ENCODE measurements at regions of chr18 and their contacts with region 1.

Region 1: DNA sequence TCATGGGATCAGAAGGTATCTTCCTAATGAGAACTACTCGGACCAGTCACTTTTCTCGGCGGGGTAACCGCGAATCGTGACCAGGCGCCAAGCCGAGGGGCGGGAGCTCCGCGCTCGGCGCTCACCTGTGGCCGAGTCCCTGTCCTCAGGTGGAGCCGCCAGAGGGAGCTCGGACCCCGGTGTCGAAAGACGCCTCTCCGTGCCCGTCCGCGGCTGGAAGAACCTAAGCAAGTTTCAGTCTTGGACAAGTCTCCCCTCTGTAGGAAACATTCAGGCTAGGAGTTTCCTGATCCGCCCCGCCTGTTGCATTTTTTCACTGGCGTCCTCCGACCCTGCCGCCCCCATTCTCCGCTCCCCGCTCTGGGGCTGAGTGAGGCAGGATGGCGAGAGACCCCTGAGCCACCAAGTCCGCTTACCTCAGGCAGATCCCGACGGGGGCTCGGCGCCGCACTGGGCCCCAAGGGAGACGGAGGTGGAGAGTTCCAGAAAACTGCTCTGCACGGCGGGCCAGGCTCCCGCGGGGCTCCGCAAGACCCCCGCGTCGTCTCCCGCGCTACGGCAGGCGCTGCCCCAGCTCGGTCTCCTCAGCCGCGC is 478 bp downstream of the DSEL start:
- DNase-seq: peak; percentile 88
- H3K4me3 ChIP-seq: peak overlapping the region; percentile 85
- H3K27ac ChIP-seq: peak overlapping the region; percentile 90
- H3K4me1 ChIP-seq: peaks cover 8% of the 10 kb centered on the region
- H3K27me3 ChIP-seq: no peaks in the 10 kb centered on the region
- CTCF ChIP-seq: peak; percentile 79

Region 2: GRCh38 chr18:67590571-67591141 is 74.6 kb after region 1 on chr18:
- CTCF ChIA-PET with region 1: no interaction called
- POLR2A ChIA-PET with region 1: no interaction called
- intact Hi-C with region 1: loop called (anchors 10 kb)
- DNase-seq: peak; percentile 76
- H3K4me3 ChIP-seq: no peak overlapping the region
- H3K27ac ChIP-seq: no peak overlapping the region
- H3K4me1 ChIP-seq: peaks cover 7% of the 10 kb centered on the region
- H3K27me3 ChIP-seq: no peaks in the 10 kb centered on the region
- CTCF ChIP-seq: peak; percentile 45

Region 3: DNA sequence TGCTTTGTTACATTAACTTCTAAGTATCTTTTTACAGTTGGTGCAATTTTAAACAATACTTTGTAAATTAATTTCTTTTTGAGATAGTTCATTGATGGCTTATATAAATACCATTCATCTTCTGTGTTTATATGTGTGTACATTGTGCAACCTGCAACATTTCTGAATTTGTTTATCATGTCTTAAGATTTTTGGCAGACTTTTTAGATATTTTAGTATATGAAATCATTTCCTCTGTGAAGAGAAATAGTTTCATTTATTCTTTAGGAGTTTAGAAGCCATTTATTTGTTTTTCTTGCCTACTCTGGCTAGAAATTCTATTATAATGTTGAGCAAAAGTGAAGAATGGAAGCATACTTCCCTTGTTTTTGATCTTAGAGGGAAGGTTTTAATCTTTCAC is 338.3 kb after region 1 on chr18:
- CTCF ChIA-PET with region 1: no interaction called
- POLR2A ChIA-PET with region 1: no interaction called
- intact Hi-C with region 1: loop called (anchors 10 kb)
- DNase-seq: no peak
- H3K4me3 ChIP-seq: no peak overlapping the region
- H3K27ac ChIP-seq: no peak overlapping the region
- H3K4me1 ChIP-seq: no peaks in the 10 kb centered on the region
- H3K27me3 ChIP-seq: no peaks in the 10 kb centered on the region
- CTCF ChIP-seq: no peak

Region 4: DNA sequence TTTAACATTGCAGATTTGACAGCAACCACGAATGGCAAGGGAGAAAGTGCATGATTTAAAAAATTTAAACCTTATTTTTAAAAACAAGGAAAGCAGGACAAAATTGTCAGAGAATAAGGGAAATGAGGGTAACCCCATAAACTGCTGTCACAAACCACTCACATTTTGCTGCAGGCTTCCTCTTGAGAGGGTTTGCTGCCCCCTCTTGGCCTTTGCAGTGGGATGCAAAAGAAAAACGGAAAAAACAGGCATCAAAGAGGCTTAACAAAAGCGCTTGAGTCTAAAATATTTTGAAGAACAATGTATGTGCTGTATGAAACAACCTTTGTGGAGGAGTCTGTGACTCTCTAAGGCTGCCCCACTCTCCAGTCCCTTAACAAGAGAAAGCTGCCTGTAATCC is 1107.3 kb after region 1 on chr18:
- CTCF ChIA-PET with region 1: no interaction called
- POLR2A ChIA-PET with region 1: no interaction called
- intact Hi-C with region 1: loop called (anchors 2 kb)
- DNase-seq: peak; percentile 92
- H3K4me3 ChIP-seq: no peak overlapping the region
- H3K27ac ChIP-seq: peak overlapping the region; percentile 57
- H3K4me1 ChIP-seq: peaks cover 16% of the 10 kb centered on the region
- H3K27me3 ChIP-seq: no peaks in the 10 kb centered on the region
- CTCF ChIP-seq: peak; percentile 85

Measured in A673 (cell line).